Endothelial cell of umbilical vein (primary cell): ENCODE measurements at regions of chr10 and their contacts with region 1.

Region 1: DNA sequence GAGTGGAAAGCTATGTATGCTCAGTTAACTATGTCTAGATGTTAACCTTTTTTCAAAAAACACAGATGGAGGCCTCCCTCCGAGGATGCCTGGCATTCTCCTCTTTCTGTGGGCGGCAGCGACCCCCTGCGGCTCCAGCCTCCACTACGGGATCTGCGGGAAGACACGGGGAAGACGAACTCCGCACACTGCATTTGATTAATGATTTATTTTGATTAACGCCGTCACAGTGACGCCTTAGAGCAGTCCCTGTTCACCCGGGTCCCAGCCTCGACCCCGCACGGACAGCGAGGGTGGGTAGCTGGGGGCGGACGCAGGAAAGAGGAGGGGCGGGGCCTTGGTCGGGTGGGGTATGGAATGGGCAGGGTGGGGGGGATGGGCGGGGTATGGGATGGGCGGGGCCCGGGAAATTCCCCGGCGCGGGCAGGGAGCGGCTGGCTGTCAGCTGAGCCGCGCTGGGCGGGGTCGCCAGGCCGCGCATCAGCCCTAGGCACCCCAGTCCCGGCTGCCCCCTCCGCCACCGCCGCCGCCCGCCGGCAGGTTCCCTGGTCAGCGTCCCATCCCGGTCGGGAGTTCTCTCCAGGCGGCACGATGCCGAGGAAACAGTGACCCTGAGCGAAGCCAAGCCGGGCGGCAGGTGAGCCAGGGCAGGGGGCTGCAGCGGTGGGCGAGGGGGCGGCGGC is at the start of gene OPTN:
- DNase-seq: peak; percentile 88
- H3K4me3 ChIP-seq: peak within 1 kb of the TSS; percentile 71 to 92 (median 91)
- H3K27ac ChIP-seq: peak within 1 kb of the TSS; percentile 66
- H3K4me1 ChIP-seq: peaks cover 9% of the 10 kb centered on the region
- H3K27me3 ChIP-seq: no peaks in the 10 kb centered on the region
- CTCF ChIP-seq: peak; percentile 81 to 82
- POLR2A ChIP-seq: peak; percentile 56
- total RNA-seq, gene OPTN: 79.9 and 94.2 TPM in 2 replicates

Region 2: DNA sequence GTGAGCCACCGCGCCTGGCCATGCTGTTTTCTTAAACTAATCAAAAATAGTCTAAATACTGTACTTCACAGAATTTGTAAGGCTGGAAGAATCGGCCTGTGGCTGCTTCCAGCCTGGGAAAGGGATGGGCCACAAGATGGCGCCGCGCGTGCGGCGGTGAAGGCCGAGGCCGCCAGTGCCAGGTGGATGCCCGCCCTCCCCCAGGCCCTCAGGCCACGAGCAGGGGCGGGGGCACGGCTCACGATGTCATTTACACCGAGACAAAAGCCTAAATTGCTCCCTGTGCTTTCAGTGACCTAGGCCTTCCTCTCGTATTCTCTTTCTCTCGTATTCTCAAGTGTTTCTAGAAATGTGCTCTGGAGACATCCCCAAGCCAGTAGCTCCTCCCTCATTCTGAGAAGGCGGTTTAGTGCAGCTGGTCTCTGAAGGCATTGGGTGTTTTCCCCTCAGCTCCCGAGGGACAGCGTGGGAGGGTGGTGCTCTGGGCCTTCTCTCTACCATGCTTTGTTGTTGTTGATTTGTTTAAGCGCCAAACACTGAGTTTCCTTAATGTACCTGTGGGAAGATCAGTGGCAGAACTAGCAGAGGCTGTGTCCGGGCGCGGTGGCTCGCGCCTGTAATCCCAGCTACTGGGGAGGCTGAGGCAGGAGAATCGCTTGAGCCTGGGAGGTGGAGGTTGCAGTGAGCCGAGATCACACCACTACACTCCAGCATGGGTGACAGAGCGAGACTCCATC is 835.4 kb before region 1 on chr10:
- CTCF ChIA-PET with region 1: interaction called, 10 read pairs
- POLR2A ChIA-PET with region 1: no interaction called
- dilution Hi-C with region 1: no loop called
- intact Hi-C with region 1: loop called (anchors 1 kb)
- DNase-seq: peak; percentile 73
- H3K4me3 ChIP-seq: peak overlapping the region in 2 of 3 experiments; percentile 13 to 29
- H3K27ac ChIP-seq: no peak overlapping the region
- H3K4me1 ChIP-seq: no peaks in the 10 kb centered on the region
- H3K27me3 ChIP-seq: no peaks in the 10 kb centered on the region
- CTCF ChIP-seq: peak; percentile 70 to 82
- POLR2A ChIP-seq: no peak

Region 3: DNA sequence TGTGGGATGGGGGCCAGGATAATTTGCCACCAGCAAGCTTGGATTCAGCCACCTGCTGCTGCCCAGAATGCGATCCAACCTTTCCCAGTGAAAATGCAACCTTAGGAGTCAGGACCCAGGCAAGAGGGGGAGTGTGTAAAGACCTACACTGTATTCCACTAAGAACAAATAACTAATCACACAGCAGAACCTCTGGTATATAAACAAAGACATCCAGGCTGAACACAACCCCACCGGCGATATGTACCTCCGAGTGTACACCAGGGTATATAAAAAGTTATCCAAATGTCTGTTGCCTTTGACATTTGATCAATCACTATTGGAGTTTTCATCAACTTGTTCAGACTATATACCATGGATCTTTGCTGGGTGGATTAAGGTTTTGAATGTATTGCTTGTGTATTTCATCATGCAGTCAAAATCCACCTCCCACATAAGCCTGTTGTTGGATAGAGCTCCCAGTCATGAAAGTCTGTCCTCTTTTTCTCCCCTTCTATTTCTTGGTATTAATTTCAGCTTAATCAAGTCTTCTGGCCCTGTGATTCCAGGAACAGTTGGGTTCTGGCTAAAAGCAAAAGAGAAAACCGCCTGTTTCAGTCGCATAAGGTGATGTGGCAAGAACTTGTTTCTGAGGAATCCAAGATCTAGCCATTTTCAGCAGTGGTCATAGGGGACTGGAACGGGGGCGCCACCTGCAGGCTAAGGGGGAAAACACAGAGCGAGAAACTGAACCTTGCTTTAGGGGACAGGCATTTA is 389.0 kb before region 1 on chr10:
- CTCF ChIA-PET with region 1: interaction called, 10 read pairs
- POLR2A ChIA-PET with region 1: no interaction called
- dilution Hi-C with region 1: no loop called
- intact Hi-C with region 1: loop called (anchors 1 kb)
- DNase-seq: peak; percentile 83
- H3K4me3 ChIP-seq: no peak overlapping the region
- H3K27ac ChIP-seq: no peak overlapping the region
- H3K4me1 ChIP-seq: peaks cover 53% of the 10 kb centered on the region
- H3K27me3 ChIP-seq: no peaks in the 10 kb centered on the region
- CTCF ChIP-seq: peak; percentile 91 to 95
- POLR2A ChIP-seq: no peak

Region 4: GRCh38 chr10:12782537-12782936 is 317.3 kb before region 1 on chr10:
- CTCF ChIA-PET with region 1: interaction called, 26 read pairs
- POLR2A ChIA-PET with region 1: no interaction called
- dilution Hi-C with region 1: no loop called
- intact Hi-C with region 1: loop called (anchors 1 kb)
- DNase-seq: peak; percentile 58
- H3K4me3 ChIP-seq: no peak overlapping the region
- H3K27ac ChIP-seq: no peak overlapping the region
- H3K4me1 ChIP-seq: peaks cover 3% of the 10 kb centered on the region
- H3K27me3 ChIP-seq: peaks cover 0 to 2% of the 10 kb centered on the region in 2 experiments
- CTCF ChIP-seq: peak; percentile 82 to 88
- POLR2A ChIP-seq: no peak

Region 5: DNA sequence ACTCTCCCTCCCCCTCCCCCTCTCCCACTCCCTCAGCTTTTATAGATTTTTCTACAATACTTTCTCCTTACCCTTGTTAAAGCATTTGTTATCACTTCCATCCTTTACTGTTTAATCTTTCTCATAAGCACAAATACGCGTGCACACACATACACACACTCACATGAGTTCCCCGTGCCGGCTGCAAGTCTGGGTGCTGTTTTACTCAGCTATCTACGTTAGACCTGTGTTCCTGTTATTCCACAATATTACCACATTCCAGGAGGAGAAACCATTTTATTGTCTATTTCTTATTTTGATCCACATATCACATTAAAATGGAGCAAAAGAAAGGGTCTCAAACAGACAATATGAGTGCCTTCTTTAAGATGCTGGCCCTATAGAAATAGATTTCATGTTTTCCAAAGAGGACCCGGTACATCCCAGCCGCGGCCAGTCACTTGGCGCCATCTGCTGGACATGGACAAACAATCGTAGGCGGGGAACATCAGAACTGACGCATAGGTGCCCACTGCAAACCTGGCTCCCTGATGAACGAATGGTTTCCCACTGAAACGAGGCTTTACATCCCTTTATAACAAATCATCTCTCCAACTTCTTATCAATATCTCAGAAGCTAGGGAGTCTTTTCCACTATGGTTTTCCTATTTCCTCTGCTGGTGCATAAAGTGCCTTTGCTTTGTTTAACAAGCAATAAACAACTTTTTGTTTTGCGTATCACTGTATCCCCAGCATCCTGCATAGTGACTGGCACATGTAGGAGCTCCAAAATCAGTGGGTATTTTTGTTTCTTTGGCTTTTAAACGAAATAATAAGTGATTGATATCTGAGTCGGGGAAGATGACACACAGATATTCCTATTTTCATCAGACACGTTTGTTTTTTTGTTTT is 25.0 kb before region 1 on chr10:
- CTCF ChIA-PET with region 1: interaction called, 4 read pairs
- POLR2A ChIA-PET with region 1: no interaction called
- dilution Hi-C with region 1: no loop called
- intact Hi-C with region 1: loop called (anchors 2 kb)
- DNase-seq: peak; percentile 61
- H3K4me3 ChIP-seq: no peak overlapping the region
- H3K27ac ChIP-seq: no peak overlapping the region
- H3K4me1 ChIP-seq: no peaks in the 10 kb centered on the region
- H3K27me3 ChIP-seq: peaks cover 5 to 7% of the 10 kb centered on the region in 2 experiments
- CTCF ChIP-seq: peak; percentile 83
- POLR2A ChIP-seq: no peak

Region 6: GRCh38 chr10:13160934-13161856 is 61.4 kb after region 1 on chr10 and contains the start of gene MCM10:
- CTCF ChIA-PET with region 1: no interaction called
- POLR2A ChIA-PET with region 1: no interaction called
- dilution Hi-C with region 1: no loop called
- intact Hi-C with region 1: loop called (anchors 1 kb)
- DNase-seq: peak; percentile 99
- H3K4me3 ChIP-seq: peak within 1 kb of the TSS; percentile 71 to 93 (median 85)
- H3K27ac ChIP-seq: peak within 1 kb of the TSS; percentile 52
- H3K4me1 ChIP-seq: peaks cover 13% of the 10 kb centered on the region
- H3K27me3 ChIP-seq: no peaks in the 10 kb centered on the region
- CTCF ChIP-seq: peak; percentile 85 to 93
- POLR2A ChIP-seq: peak; percentile 49
- total RNA-seq, gene MCM10: 28.7 and 31.6 TPM in 2 replicates